ENCODE measurements at regions of chr7 and their contacts with region 1.

Region 1: GRCh38 chr7:44980393-44981034 is 1.7 kb upstream of the MYO1G start:
- DNase-seq: peak; percentile 95
- H3K4me3 Mint-ChIP-seq: peak overlapping the region; percentile 99
- H3K27ac Mint-ChIP-seq: peak overlapping the region; percentile 99
- H3K4me1 Mint-ChIP-seq: peaks cover 58% of the 10 kb centered on the region
- H3K27me3 Mint-ChIP-seq: no peaks in the 10 kb centered on the region

Region 2: DNA sequence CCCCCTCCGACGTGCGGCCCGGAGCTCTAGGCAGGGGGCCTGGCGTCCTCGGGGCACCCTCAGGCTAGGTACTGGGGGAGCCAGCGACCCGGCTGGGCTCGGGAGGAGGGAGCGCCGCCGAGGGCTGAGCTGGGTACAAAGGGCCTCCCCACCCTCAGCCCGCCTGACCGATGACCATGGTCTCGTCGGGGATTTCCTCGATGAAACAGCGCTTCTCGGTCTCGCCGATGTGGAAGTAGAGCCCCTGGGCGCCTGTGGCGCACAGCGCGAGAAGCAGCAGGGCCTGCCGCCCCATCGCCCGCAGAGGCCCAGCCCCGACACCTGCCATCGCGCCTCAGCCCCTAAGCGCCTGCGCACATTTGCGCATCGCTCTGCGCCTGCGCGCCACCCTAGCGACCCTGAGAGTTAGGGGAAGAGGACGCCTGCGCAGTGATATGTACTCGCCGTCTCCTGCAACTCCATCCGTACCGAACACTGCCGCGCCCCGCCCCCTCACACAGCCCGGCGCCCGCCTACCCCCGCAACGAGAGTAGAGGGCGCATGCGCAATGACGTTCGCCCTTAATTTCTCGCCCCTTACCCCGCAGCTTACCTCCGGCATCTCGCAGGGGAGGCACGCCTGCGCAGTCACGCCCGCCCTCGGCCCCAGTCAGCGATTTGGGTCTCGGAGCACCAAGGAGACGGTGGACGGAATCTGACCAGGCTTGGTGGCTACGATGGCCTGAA is 398.5 kb before region 1 on chr7 and contains the start of gene TMED4:
- CTCF ChIA-PET with region 1: no interaction called
- intact Hi-C with region 1: loop called (anchors 1 kb)
- DNase-seq: peak; percentile 100
- H3K4me3 Mint-ChIP-seq: peak within 1 kb of the TSS; percentile 90
- H3K27ac Mint-ChIP-seq: peak within 1 kb of the TSS; percentile 87
- H3K4me1 Mint-ChIP-seq: peaks cover 33% of the 10 kb centered on the region
- H3K27me3 Mint-ChIP-seq: peaks cover 2% of the 10 kb centered on the region
- total RNA-seq, gene TMED4: 77.3 to 81.8 TPM

Region 3: DNA sequence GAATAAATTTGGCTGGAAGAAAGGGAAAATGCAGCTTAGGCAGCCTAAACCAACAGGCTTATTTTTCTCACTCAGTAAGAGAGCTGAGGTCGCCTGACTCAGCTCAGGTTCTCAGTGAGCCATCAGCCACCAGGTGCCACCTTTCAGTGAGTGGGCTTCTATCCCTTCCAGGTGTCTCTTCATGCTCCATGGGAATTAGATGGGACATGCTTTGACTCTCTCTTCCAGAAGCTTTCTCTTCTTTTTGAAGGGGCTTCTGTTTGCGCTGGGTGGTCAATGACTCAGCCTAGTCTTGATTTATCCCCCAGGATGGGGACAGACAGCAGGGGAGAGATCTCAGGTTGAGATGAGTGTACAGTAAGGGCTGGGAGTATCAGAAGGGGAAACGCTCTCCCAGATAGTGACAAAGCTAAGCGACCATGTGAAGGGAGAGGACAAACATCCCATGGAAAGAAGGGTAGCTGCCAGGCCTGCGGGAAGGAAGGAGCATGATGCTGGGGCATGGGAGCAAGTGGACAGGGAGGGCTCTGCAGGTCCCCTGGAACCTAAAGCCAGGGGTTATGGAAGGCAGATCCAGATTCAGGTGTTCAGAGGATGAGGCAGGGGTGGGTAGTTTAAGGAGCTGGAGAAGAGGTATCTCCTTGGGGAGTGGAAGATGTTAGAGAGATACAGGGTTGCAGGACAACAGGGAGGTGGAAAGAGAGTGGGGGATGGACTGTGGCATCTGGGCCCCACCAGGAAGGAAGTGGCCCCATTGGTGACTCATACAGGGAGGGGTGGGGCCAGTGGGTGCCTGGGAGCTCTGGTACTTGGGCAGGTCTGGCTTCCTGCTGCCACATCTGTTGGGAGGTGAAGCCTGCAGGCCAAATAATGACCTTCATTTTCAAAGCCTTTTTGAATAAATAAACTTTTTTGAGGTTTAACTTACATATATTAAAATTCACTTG is 341.6 kb before region 1 on chr7:
- CTCF ChIA-PET with region 1: no interaction called
- intact Hi-C with region 1: loop called (anchors 1 kb)
- DNase-seq: peak; percentile 92
- H3K4me3 Mint-ChIP-seq: peak overlapping the region; percentile 54
- H3K27ac Mint-ChIP-seq: peak overlapping the region; percentile 97
- H3K4me1 Mint-ChIP-seq: peaks cover 64% of the 10 kb centered on the region
- H3K27me3 Mint-ChIP-seq: no peaks in the 10 kb centered on the region

Region 4: GRCh38 chr7:44858161-44858560 is 122.4 kb before region 1 on chr7:
- CTCF ChIA-PET with region 1: no interaction called
- intact Hi-C with region 1: loop called (anchors 1 kb)
- DNase-seq: no peak
- H3K4me3 Mint-ChIP-seq: no peak overlapping the region
- H3K27ac Mint-ChIP-seq: no peak overlapping the region
- H3K4me1 Mint-ChIP-seq: peaks cover 23% of the 10 kb centered on the region
- H3K27me3 Mint-ChIP-seq: no peaks in the 10 kb centered on the region

Region 5: GRCh38 chr7:44914992-44915607 is 65.4 kb before region 1 on chr7:
- CTCF ChIA-PET with region 1: no interaction called
- intact Hi-C with region 1: loop called (anchors 1 kb)
- DNase-seq: peak; percentile 88
- H3K4me3 Mint-ChIP-seq: no peak overlapping the region
- H3K27ac Mint-ChIP-seq: peak overlapping the region; percentile 83
- H3K4me1 Mint-ChIP-seq: peaks cover 17% of the 10 kb centered on the region
- H3K27me3 Mint-ChIP-seq: no peaks in the 10 kb centered on the region

Region 6: GRCh38 chr7:45033261-45033930 is 52.9 kb after region 1 on chr7:
- CTCF ChIA-PET with region 1: no interaction called
- intact Hi-C with region 1: loop called (anchors 1 kb)
- DNase-seq: no peak
- H3K4me3 Mint-ChIP-seq: no peak overlapping the region
- H3K27ac Mint-ChIP-seq: peak overlapping the region; percentile 84
- H3K4me1 Mint-ChIP-seq: peaks cover 79% of the 10 kb centered on the region
- H3K27me3 Mint-ChIP-seq: no peaks in the 10 kb centered on the region

Region 7: DNA sequence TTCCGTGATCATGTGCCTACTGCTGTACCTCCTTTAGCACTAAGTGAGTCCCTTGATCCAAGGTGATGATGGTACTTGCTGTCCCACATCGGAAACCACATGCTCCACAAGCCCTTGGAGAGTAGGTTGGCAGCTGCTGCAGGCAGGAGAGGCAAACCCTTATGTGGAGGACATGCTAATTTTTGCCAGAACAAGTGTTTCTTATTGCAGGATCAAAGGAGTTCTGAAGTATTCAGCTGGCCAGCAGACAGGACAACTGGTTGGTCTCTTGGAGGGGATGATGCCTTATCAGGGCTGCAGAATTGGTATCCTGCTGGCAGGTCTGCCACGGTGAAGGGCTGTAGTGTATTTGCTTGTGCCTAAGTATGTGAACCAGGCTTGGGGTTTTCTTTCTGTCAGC is 71.5 kb after region 1 on chr7:
- CTCF ChIA-PET with region 1: no interaction called
- intact Hi-C with region 1: no loop called
- DNase-seq: no peak
- H3K4me3 Mint-ChIP-seq: no peak overlapping the region
- H3K27ac Mint-ChIP-seq: no peak overlapping the region
- H3K4me1 Mint-ChIP-seq: peaks cover 57% of the 10 kb centered on the region
- H3K27me3 Mint-ChIP-seq: no peaks in the 10 kb centered on the region

Region 8: GRCh38 chr7:45065031-45065995 is 84.8 kb after region 1 on chr7:
- CTCF ChIA-PET with region 1: no interaction called
- intact Hi-C with region 1: no loop called
- DNase-seq: no peak
- H3K4me3 Mint-ChIP-seq: no peak overlapping the region
- H3K27ac Mint-ChIP-seq: no peak overlapping the region
- H3K4me1 Mint-ChIP-seq: peaks cover 19% of the 10 kb centered on the region
- H3K27me3 Mint-ChIP-seq: no peaks in the 10 kb centered on the region

Region 9: GRCh38 chr7:45278763-45279398 is 298.4 kb after region 1 on chr7:
- CTCF ChIA-PET with region 1: no interaction called
- intact Hi-C with region 1: no loop called
- DNase-seq: no peak
- H3K4me3 Mint-ChIP-seq: no peak overlapping the region
- H3K27ac Mint-ChIP-seq: no peak overlapping the region
- H3K4me1 Mint-ChIP-seq: no peaks in the 10 kb centered on the region
- H3K27me3 Mint-ChIP-seq: peaks cover 10% of the 10 kb centered on the region